Endothelial cell of umbilical vein (primary cell): ENCODE measurements at regions of chr7 and their contacts with region 1.

Region 1: DNA sequence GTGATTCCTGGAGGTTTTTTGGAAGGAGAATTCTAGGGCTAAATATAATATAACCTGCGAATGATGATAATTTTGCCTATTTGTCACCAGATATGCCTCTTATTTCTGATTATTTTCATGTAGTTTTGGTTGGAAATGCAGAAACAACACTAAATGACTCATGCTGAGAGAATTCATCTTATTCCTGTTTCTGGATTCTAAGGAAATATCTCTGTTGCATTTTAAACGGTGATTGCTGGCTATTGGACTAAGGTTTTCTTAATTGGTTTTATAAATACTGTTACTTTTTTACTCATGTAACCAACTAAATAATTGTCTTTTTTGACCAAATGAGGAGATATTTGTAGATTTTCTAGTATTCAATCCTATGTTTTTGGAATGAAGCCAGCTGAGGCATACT is 204.9 kb upstream of the NPSR1 start:
- DNase-seq: peak; percentile 71
- H3K4me3 ChIP-seq: peak overlapping the region in 1 of 3 experiments; percentile 27
- H3K27ac ChIP-seq: peak overlapping the region; percentile 63
- H3K4me1 ChIP-seq: peaks cover 30% of the 10 kb centered on the region
- H3K27me3 ChIP-seq: no peaks in the 10 kb centered on the region
- CTCF ChIP-seq: no peak
- POLR2A ChIP-seq: no peak

Region 2: DNA sequence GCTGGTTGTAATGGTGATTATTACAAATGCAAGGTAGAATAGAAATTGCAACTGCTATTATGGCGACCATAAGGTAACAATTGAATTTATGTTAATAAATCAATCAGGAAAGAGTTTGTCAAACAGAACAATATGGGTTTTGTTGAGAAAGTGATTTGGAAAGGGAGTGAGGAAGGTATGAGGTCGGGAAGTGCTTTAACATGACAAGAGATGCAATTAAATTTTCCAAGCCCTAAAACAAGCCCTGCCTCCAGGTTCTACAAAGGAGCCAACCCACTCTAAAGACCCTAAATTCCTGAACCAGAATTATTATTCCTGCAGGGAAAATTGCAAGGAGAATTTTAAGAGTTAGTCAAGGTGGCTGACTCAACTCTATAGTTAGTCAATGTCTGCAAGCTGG is 184.1 kb before region 1 on chr7:
- CTCF ChIA-PET with region 1: no interaction called
- POLR2A ChIA-PET with region 1: no interaction called
- dilution Hi-C with region 1: no loop called
- intact Hi-C with region 1: no loop called
- DNase-seq: no peak
- H3K4me3 ChIP-seq: no peak overlapping the region
- H3K27ac ChIP-seq: no peak overlapping the region
- H3K4me1 ChIP-seq: no peaks in the 10 kb centered on the region
- H3K27me3 ChIP-seq: no peaks in the 10 kb centered on the region
- CTCF ChIP-seq: no peak
- POLR2A ChIP-seq: no peak

Region 3: DNA sequence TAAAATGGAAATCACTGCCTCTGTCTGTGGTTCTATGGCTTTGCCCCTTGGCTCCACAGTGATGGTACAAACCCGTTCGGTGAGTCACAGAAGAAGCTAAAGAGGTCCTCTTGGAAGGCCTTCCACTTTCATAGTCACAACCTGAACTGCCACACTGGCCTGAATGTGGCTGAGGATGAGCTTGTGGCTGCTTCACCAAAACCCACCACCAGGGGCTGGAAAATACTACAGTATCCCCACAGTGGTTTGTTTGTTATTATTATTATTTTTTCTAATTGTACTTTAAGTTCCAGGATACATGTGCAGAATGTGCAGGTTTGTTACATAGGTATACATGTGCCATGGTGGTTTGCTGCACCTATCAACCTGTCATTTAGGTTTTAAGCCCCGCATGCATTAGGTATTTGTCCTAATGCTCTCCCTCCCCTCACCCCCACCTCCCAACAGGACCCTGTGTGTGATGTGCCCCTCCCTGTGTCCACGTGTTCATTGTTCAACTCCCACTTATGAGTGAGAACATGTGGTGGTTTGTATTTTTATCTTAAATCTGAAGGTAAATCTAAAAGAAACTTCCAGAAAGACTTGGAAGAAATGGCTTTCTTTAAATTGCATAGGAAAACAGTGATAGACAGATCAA is 44.1 kb after region 1 on chr7:
- CTCF ChIA-PET with region 1: interaction called, 12 read pairs
- POLR2A ChIA-PET with region 1: no interaction called
- dilution Hi-C with region 1: no loop called
- intact Hi-C with region 1: no loop called
- DNase-seq: no peak
- H3K4me3 ChIP-seq: no peak overlapping the region
- H3K27ac ChIP-seq: no peak overlapping the region
- H3K4me1 ChIP-seq: no peaks in the 10 kb centered on the region
- H3K27me3 ChIP-seq: no peaks in the 10 kb centered on the region
- CTCF ChIP-seq: peak; percentile 12 to 34
- POLR2A ChIP-seq: no peak

Region 4: GRCh38 chr7:34552502-34552901 is 99.4 kb after region 1 on chr7:
- CTCF ChIA-PET with region 1: no interaction called
- POLR2A ChIA-PET with region 1: no interaction called
- dilution Hi-C with region 1: no loop called
- intact Hi-C with region 1: no loop called
- DNase-seq: no peak
- H3K4me3 ChIP-seq: no peak overlapping the region
- H3K27ac ChIP-seq: no peak overlapping the region
- H3K4me1 ChIP-seq: no peaks in the 10 kb centered on the region
- H3K27me3 ChIP-seq: no peaks in the 10 kb centered on the region
- CTCF ChIP-seq: no peak
- POLR2A ChIP-seq: no peak

Region 5: DNA sequence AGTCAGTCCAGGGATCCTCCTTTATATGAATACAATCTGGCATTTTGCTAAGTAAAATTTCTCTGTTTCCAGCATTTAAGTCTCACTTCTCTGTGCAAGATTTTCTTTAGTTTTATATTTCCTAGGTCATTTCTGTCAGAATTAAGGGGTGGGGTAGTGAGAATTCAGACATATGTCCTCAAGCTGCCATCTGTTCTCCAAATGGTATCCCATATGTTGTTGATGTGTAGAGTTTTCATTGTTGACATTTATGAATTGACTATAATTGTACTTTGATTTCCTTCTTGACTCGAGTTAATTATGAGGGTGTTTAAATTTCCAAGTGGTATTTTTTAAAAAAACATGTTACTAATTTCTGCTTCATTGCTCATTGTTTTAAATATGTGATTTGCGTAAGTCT is 353.7 kb after region 1 on chr7:
- CTCF ChIA-PET with region 1: no interaction called
- POLR2A ChIA-PET with region 1: no interaction called
- dilution Hi-C with region 1: no loop called
- intact Hi-C with region 1: no loop called
- DNase-seq: no peak
- H3K4me3 ChIP-seq: no peak overlapping the region
- H3K27ac ChIP-seq: no peak overlapping the region
- H3K4me1 ChIP-seq: no peaks in the 10 kb centered on the region
- H3K27me3 ChIP-seq: peaks cover 0 to 2% of the 10 kb centered on the region in 2 experiments
- CTCF ChIP-seq: no peak
- POLR2A ChIP-seq: no peak

Region 6: DNA sequence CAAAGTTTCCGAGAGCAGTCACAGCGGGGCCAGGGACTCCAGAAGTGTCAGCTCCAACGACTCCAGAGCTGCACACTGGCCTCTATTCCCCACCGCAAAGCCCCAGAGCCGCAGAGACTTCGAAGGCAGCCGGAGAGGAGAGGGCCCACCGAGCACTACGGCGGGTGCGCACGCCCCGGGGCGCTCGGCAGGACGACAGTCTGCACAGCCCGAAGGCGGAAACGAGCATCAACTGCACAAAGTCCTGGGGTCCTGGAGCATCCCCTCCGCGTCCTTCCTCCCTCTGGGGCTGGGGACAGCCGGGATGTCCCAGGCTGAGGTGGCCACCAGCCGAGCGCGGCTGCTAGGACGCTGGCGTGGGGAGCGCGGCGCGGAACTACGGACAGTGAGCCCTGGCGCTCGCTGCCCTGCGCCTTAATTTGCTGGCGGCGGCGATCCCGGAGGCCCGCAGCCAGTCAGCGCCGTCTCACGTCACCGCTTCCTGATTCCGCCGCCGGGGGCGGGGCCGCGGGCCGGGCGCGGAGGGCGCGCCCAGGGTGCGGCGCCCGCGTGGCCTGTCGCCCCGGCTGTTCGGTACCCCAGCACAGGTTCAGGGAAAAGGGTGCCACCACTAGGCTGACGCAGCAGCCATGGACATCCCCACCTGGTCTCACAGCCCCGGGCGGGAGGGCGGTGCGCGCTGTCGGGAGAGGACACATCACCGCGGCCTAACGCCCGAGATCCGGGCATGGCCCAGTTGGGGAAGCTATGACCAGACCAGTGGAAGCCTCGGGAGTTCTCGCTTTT is 800.8 kb after region 1 on chr7 and contains the start of gene TBX20:
- CTCF ChIA-PET with region 1: no interaction called
- POLR2A ChIA-PET with region 1: no interaction called
- dilution Hi-C with region 1: no loop called
- intact Hi-C with region 1: loop called (anchors 10 kb)
- DNase-seq: peak; percentile 35
- H3K4me3 ChIP-seq: peak within 1 kb of the TSS; percentile 16 to 45 (median 32)
- H3K27ac ChIP-seq: no peak within 1 kb of the TSS
- H3K4me1 ChIP-seq: peaks cover 12% of the 10 kb centered on the region
- H3K27me3 ChIP-seq: peaks cover 88 to 100% of the 10 kb centered on the region in 2 experiments
- CTCF ChIP-seq: no peak
- POLR2A ChIP-seq: no peak
- total RNA-seq, gene TBX20: not detected in 2 replicates